Mammary epithelial cell (primary cell): ENCODE measurements at regions of chr10 and their contacts with region 1.

Region 1: DNA sequence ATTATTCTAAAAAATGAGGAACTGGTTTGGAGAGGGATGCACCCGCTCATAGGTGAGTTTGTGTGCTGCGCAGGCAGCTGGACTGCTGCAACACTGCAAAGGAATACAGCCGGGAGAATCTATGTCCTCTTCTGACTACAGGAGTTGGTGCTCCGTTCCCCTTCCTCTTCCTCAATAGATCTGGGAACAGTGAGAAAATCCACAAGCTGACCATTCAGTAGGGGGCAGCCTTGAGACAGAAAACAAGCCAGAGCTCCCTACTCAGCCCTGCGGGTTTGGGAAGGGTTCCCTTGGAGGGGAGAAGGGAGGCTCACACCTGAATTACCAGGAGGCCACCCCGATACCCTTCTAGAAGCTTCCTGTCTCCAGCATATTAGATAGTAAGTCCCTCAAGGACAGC is 87.3 kb upstream of the FOXI2 start:
- DNase-seq: no peak
- H3K4me3 ChIP-seq: no peak overlapping the region
- H3K27ac ChIP-seq: no peak overlapping the region
- H3K4me1 ChIP-seq: no peaks in the 10 kb centered on the region
- H3K27me3 ChIP-seq: no peaks in the 10 kb centered on the region
- CTCF ChIP-seq: peak in 1 of 2 donors; percentile 50

Region 2: GRCh38 chr10:127570036-127570435 is 79.6 kb before region 1 on chr10:
- CTCF ChIA-PET with region 1: no interaction called
- dilution Hi-C with region 1: no loop called
- in situ Hi-C with region 1: no loop called
- intact Hi-C with region 1: no loop called
- DNase-seq: peak; percentile 4
- H3K4me3 ChIP-seq: no peak overlapping the region
- H3K27ac ChIP-seq: no peak overlapping the region
- H3K4me1 ChIP-seq: no peaks in the 10 kb centered on the region
- H3K27me3 ChIP-seq: peaks cover 6% of the 10 kb centered on the region
- CTCF ChIP-seq: no peak

Region 3: DNA sequence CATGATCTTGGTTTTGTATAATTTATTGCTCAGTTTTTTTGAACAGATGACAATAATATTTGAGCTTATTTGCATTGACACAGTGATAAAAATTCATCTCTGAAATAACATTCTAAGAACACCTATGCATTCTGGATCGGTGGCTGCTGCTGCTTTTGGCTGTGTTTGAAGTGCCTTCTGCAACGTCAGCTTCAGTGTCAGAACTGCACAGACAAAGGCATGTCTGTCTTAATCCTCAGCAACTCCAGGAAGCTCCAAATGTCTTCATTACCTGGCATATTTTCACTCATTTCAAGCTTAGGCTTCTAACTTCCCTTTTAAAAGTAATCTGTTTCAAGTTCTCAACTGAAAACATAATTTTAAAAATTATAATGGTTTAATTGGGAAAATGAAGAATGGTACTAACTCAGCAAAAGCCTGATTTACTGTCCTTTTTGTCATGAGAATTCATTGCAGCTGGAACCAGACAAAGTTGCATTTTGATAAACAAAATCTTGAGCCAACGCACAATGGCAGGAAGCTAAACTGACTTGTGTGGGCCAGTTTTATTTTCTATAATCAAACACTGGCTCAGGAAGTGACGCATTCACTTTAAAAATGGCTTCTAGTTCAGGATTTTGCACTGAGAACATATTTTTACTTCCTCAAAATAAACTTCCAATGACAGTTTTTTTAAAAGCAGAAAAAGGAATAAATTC is 61.8 kb before region 1 on chr10:
- CTCF ChIA-PET with region 1: no interaction called
- dilution Hi-C with region 1: no loop called
- in situ Hi-C with region 1: no loop called
- intact Hi-C with region 1: no loop called
- DNase-seq: no peak
- H3K4me3 ChIP-seq: no peak overlapping the region
- H3K27ac ChIP-seq: no peak overlapping the region
- H3K4me1 ChIP-seq: no peaks in the 10 kb centered on the region
- H3K27me3 ChIP-seq: no peaks in the 10 kb centered on the region
- CTCF ChIP-seq: no peak

Region 4: DNA sequence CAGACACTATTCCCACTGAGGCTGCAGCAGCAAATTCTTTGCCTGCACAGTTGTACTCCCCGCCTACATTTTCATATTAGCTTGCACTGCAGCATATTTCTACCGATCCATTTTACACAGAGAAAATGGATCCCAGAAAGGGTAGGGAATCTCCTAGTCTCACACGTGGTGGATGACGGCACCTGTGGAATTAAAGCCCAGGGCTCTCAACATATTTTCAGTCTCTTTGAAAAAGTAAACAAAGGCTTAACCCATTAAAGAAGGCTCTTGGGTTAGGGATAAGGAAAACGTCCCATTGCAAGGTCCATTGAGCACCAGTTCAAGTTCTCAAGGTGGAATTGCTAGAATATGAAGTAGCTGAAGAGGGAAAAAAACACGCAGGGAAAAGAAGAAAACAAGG is 37.9 kb after region 1 on chr10:
- CTCF ChIA-PET with region 1: no interaction called
- dilution Hi-C with region 1: loop called (anchors 5 kb)
- in situ Hi-C with region 1: no loop called
- intact Hi-C with region 1: no loop called
- DNase-seq: no peak
- H3K4me3 ChIP-seq: no peak overlapping the region
- H3K27ac ChIP-seq: no peak overlapping the region
- H3K4me1 ChIP-seq: no peaks in the 10 kb centered on the region
- H3K27me3 ChIP-seq: no peaks in the 10 kb centered on the region
- CTCF ChIP-seq: no peak